A673 (cell line): ENCODE measurements at regions of chrX and their contacts with region 1.

Region 1: GRCh38 chrX:11533211-11533651 is 132.5 kb downstream of the ARHGAP6 start:
- DNase-seq: peak; percentile 89
- H3K4me3 ChIP-seq: no peak overlapping the region
- H3K27ac ChIP-seq: no peak overlapping the region
- H3K4me1 ChIP-seq: no peaks in the 10 kb centered on the region
- H3K27me3 ChIP-seq: peaks cover 4% of the 10 kb centered on the region
- CTCF ChIP-seq: peak; percentile 96

Region 2: DNA sequence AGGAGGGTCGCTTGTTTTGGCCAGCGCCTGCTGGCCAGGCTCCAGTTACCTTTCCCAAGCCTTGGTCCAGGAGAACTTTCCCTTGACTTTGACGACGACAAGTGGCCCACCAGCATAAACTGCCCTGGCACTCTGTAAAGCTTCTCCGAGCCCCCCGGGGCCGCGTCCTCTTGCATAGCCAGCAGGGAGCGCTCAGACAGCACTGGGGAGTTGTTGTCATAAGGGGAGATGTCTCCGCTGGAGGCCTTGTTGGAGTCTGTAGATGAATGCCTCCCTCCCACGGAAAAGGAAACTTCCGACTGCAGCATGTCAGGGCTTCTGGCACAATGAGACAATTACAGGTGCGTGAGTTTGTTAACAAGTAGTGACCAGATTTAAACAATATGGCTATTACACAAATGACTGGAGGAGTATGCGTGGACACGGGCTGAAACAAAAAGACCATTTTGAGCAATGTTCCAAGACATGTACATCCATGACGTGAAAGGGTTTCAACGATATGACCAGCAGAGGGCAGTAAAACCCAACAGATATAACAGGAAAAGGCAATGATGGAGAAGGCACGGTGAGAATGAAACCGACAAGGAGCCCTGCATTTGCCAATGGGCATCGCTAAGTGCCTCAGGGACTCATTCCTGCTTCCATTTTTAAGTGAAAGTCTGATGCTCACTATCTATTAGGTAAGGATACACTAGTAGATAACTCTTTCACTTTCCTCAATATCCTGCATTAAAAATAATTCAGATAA is 389.1 kb before region 1 on chrX:
- CTCF ChIA-PET with region 1: no interaction called
- POLR2A ChIA-PET with region 1: no interaction called
- intact Hi-C with region 1: loop called (anchors 2 kb)
- DNase-seq: peak; percentile 86
- H3K4me3 ChIP-seq: no peak overlapping the region
- H3K27ac ChIP-seq: no peak overlapping the region
- H3K4me1 ChIP-seq: no peaks in the 10 kb centered on the region
- H3K27me3 ChIP-seq: no peaks in the 10 kb centered on the region
- CTCF ChIP-seq: peak; percentile 75

Region 3: DNA sequence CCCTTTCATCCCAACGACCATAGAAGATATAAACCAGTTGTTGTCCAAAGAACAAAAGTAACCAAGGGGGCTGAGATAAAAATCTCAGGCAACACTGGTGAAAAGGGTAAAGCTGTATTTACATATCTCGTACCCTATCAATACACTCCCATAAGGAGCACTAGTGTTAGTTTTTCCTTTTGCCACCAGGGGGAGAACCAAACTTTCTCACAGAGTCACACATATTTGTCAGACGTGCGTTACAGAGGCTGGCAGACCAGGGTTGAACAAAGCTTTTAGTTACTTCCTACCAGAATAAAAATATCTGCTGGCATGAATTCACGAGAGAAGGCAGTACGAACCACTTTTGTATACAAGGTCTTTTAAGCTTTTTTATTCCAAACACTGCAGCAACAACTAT is 151.8 kb before region 1 on chrX:
- CTCF ChIA-PET with region 1: interaction called, 3 read pairs
- POLR2A ChIA-PET with region 1: no interaction called
- intact Hi-C with region 1: loop called (anchors 2 kb)
- DNase-seq: peak; percentile 76
- H3K4me3 ChIP-seq: no peak overlapping the region
- H3K27ac ChIP-seq: no peak overlapping the region
- H3K4me1 ChIP-seq: no peaks in the 10 kb centered on the region
- H3K27me3 ChIP-seq: no peaks in the 10 kb centered on the region
- CTCF ChIP-seq: peak; percentile 70

Region 4: DNA sequence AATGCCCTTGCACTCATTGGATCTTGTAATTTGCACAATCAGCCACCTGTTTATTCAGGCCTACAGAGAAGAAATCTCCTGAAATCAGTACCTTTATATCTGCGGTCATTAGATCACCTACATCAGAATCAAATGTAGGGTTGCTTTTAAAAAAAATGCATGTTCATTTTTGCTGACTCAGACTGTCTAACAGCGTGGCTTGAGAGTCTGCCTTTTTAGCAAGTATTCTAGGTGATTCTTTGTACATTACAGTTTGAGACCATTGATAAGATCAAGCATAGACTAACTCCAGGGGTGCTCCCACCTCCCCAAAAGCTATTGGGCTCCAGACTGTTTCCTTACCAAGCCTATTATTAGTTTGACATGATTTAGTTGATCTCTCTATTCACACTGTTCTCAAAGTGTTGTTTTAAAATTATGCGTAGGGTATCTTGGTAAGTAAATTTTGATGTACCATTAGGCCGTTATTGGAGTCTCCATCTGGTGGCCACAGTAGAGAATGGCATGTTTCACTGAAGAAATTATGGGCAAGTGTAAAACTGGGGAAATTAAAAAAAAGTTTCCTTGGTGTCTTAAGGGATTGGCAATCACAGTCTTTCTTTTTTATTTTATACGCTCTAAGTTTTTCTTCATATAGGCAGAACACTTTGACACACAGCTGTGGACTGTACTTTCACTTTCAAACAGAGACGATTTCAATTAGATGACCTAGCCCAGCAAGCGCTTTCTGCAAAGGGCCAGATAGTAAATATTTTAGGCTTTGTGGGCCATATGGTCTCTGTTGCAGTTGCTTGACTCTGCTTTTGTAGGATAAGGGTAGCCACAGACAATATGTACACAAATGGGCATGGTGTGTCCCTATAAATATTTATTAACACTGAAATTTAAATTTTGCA is 191.1 kb after region 1 on chrX:
- CTCF ChIA-PET with region 1: interaction called, 4 read pairs
- POLR2A ChIA-PET with region 1: no interaction called
- intact Hi-C with region 1: loop called (anchors 2 kb)
- DNase-seq: peak; percentile 49
- H3K4me3 ChIP-seq: no peak overlapping the region
- H3K27ac ChIP-seq: no peak overlapping the region
- H3K4me1 ChIP-seq: no peaks in the 10 kb centered on the region
- H3K27me3 ChIP-seq: peaks cover 7% of the 10 kb centered on the region
- CTCF ChIP-seq: peak; percentile 79

Region 5: DNA sequence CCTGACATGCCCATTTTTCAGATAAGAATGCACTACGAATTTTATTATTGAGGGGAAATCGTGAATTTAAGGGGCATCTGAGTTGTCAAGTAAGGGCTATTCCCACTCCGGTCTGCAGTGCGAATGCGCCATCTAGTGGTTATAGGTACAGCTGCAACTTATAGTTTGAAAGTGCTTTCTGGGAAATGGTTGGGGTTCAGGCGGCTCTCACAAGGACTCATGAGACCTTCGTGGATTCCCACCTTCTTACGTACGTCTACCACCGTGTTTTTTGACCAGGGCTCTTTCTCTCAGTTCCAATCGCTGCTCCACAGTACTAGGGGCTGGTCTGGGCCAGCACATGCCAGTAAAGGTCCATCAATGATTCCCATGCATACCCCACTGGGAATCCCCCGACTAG is 237.1 kb after region 1 on chrX:
- CTCF ChIA-PET with region 1: no interaction called
- POLR2A ChIA-PET with region 1: no interaction called
- intact Hi-C with region 1: loop called (anchors 1 kb)
- DNase-seq: peak; percentile 68
- H3K4me3 ChIP-seq: no peak overlapping the region
- H3K27ac ChIP-seq: no peak overlapping the region
- H3K4me1 ChIP-seq: no peaks in the 10 kb centered on the region
- H3K27me3 ChIP-seq: no peaks in the 10 kb centered on the region
- CTCF ChIP-seq: peak; percentile 90

Region 6: GRCh38 chrX:11908371-11908770 is 375.1 kb after region 1 on chrX:
- CTCF ChIA-PET with region 1: no interaction called
- POLR2A ChIA-PET with region 1: no interaction called
- intact Hi-C with region 1: loop called (anchors 10 kb)
- DNase-seq: peak; percentile 49
- H3K4me3 ChIP-seq: no peak overlapping the region
- H3K27ac ChIP-seq: no peak overlapping the region
- H3K4me1 ChIP-seq: no peaks in the 10 kb centered on the region
- H3K27me3 ChIP-seq: peaks cover 8% of the 10 kb centered on the region
- CTCF ChIP-seq: peak; percentile 64